ENCODE measurements at regions of chr19 and their contacts with region 1.

Region 1: DNA sequence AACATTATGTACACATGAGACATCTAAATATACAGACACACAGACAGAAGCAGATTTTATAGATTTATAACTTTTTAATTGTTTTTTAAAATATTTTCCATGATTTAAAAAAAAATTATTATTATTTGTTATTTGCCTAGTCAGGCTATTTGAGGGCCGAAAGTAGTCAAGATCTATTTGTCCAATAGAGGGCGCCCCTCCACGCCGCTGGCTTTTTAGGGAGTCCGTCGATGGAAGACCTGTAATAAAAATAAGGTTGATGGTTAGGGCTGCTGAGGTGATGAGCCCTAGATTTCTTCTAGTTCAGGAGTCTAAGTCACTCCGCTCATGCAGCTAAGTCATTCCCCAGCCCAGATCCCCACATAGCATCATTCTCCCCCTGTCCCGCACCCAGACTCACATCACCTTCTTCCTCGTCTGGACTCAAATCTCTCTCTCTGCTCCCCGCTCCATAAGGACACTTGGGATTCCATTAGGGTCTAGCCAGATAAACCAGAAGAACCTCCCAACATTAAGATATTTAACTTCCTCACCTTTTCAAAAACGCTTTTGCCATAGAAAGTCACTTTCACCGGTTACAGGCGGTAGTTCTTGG is 33.9 kb upstream of the CEACAM21 start:
- DNase-seq: peak; percentile 60
- H3K4me3 Mint-ChIP-seq: peak overlapping the region; percentile 34
- H3K27ac Mint-ChIP-seq: peak overlapping the region; percentile 62
- H3K4me1 Mint-ChIP-seq: peaks cover 63% of the 10 kb centered on the region
- H3K27me3 Mint-ChIP-seq: no peaks in the 10 kb centered on the region

Region 2: GRCh38 chr19:41431426-41432386 is 110.4 kb before region 1 on chr19:
- intact Hi-C with region 1: no loop called
- DNase-seq: no peak
- H3K4me3 Mint-ChIP-seq: no peak overlapping the region
- H3K27ac Mint-ChIP-seq: no peak overlapping the region
- H3K4me1 Mint-ChIP-seq: peaks cover 22% of the 10 kb centered on the region
- H3K27me3 Mint-ChIP-seq: no peaks in the 10 kb centered on the region

Region 3: GRCh38 chr19:41449079-41449864 is 92.8 kb before region 1 on chr19:
- intact Hi-C with region 1: loop called (anchors 1 kb)
- DNase-seq: peak; percentile 63
- H3K4me3 Mint-ChIP-seq: peak overlapping the region; percentile 56
- H3K27ac Mint-ChIP-seq: no peak overlapping the region
- H3K4me1 Mint-ChIP-seq: peaks cover 14% of the 10 kb centered on the region
- H3K27me3 Mint-ChIP-seq: peaks cover 3% of the 10 kb centered on the region

Region 4: DNA sequence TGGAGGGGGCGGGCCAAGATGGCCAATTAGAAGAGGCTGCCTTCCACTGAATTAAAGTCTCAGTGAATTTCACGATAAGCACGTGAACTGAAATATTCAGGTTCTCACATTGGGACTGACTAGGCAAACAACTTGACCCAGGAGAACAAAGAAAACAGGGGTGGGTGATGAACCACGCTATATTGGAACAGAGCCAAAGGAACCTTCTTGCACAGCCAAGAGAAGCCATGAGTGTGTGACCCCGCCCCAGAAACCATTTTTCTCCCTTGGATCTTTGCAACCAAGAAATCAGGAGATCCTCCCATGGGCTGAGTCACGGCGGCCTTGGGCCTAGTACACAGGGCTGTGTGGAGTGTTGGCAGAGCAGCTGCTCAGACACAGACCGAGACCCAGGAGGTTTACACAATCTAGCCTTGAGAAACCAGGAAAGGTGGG is 62.3 kb before region 1 on chr19:
- intact Hi-C with region 1: no loop called
- DNase-seq: no peak
- H3K4me3 Mint-ChIP-seq: no peak overlapping the region
- H3K27ac Mint-ChIP-seq: no peak overlapping the region
- H3K4me1 Mint-ChIP-seq: no peaks in the 10 kb centered on the region
- H3K27me3 Mint-ChIP-seq: peaks cover 35% of the 10 kb centered on the region

Region 5: DNA sequence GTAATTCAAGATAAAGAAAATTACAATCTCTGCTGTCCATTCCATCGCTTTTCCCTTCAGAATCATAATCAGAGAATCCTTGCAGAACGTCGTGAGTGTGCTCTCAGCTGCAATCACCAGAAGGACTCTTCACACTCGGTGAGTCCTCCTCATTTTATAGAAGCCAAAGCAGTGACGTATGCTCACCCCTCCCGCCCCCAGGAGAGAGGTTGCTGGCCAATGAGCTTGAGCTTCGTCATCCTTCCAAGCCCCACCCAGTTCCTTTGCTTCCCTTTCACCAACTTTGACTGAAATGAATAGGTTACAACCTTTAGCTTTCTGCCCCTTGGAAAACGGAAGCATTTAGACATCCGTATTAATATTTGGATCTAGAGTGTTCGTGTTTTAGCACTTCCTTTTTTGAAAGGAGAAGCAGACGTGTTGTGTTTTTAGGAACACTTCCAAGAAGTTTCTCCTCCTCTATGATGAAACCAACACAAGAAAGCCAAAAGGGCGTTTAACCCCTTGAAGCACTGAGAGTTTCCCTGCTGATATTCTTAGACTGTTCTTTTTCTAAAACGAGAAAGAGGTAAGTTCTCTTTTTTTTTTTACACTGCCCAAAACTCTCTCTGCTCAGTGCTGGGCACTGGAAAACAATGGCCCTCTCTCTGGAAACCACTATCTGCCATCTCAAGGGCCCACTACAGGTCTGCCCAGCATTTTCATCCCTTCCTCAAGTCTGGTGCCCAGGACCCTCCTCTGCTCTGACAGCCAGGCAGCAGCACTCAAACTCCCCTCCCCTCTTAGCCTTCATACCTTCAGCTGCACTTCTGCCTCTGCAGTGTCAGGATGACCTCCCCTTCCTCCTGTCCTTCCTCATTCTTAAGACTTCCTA is 10.4 kb before region 1 on chr19:
- intact Hi-C with region 1: loop called (anchors 1 kb)
- DNase-seq: peak; percentile 84
- H3K4me3 Mint-ChIP-seq: peak overlapping the region; percentile 86
- H3K27ac Mint-ChIP-seq: peak overlapping the region; percentile 79
- H3K4me1 Mint-ChIP-seq: peaks cover 64% of the 10 kb centered on the region
- H3K27me3 Mint-ChIP-seq: peaks cover 6% of the 10 kb centered on the region

Region 6: GRCh38 chr19:41554907-41555306 is 12.8 kb after region 1 on chr19:
- intact Hi-C with region 1: loop called (anchors 1 kb)
- DNase-seq: no peak
- H3K4me3 Mint-ChIP-seq: peak overlapping the region; percentile 70
- H3K27ac Mint-ChIP-seq: peak overlapping the region; percentile 85
- H3K4me1 Mint-ChIP-seq: peaks cover 69% of the 10 kb centered on the region
- H3K27me3 Mint-ChIP-seq: no peaks in the 10 kb centered on the region

Region 7: DNA sequence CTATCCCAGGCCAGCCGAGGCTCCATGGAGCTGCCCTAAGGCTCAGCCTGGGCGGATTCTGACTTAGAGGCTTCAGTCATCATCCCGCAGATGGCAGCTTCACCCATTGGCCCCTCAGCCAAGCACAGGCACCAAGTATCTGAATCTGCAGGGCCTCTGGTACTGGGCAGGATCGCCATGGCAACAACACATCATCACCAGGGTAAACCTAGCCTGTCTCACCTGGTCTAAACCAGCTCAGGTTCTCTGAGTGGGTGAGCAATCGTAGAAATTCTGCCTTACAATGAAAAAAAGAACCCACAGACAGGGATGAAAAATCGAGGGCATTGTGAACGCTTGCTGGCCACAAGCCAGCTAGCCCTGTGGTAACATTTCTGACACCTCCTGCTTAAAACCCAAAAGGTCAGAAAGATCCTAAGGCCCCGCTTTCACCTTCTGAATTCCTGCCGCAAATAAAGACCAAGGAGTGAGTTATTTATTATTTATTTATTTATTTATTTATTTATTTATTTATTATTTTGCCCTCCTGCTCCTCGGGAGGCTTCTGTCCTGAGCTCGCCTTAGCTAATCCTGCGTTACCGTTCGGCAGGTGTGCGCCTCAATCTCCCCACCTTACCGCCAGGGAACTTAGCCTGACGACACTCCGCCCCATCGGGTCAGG is 21.9 kb after region 1 on chr19:
- intact Hi-C with region 1: loop called (anchors 1 kb)
- DNase-seq: no peak
- H3K4me3 Mint-ChIP-seq: peak overlapping the region; percentile 18
- H3K27ac Mint-ChIP-seq: no peak overlapping the region
- H3K4me1 Mint-ChIP-seq: peaks cover 34% of the 10 kb centered on the region
- H3K27me3 Mint-ChIP-seq: peaks cover 11% of the 10 kb centered on the region

Region 8: GRCh38 chr19:41570639-41571112 is 28.6 kb after region 1 on chr19:
- intact Hi-C with region 1: loop called (anchors 2 kb)
- DNase-seq: peak; percentile 72
- H3K4me3 Mint-ChIP-seq: no peak overlapping the region
- H3K27ac Mint-ChIP-seq: no peak overlapping the region
- H3K4me1 Mint-ChIP-seq: peaks cover 9% of the 10 kb centered on the region
- H3K27me3 Mint-ChIP-seq: peaks cover 2% of the 10 kb centered on the region

Region 9: GRCh38 chr19:41597600-41598041 is 55.5 kb after region 1 on chr19:
- intact Hi-C with region 1: loop called (anchors 1 kb)
- DNase-seq: peak; percentile 55
- H3K4me3 Mint-ChIP-seq: no peak overlapping the region
- H3K27ac Mint-ChIP-seq: no peak overlapping the region
- H3K4me1 Mint-ChIP-seq: peaks cover 12% of the 10 kb centered on the region
- H3K27me3 Mint-ChIP-seq: peaks cover 26% of the 10 kb centered on the region

Region 10: GRCh38 chr19:42010245-42011126 is 468.4 kb after region 1 on chr19:
- intact Hi-C with region 1: no loop called
- DNase-seq: no peak
- H3K4me3 Mint-ChIP-seq: no peak overlapping the region
- H3K27ac Mint-ChIP-seq: no peak overlapping the region
- H3K4me1 Mint-ChIP-seq: peaks cover 7% of the 10 kb centered on the region
- H3K27me3 Mint-ChIP-seq: no peaks in the 10 kb centered on the region